ENCODE measurements at regions of chr20 and their contacts with region 1.

Region 1: GRCh38 chr20:12594410-12595088 is 414.2 kb upstream of the SPTLC3 start:
- DNase-seq: no peak
- ATAC-seq: no peak
- H3K4me3 ChIP-seq: no peak overlapping the region
- H3K4me3 Mint-ChIP-seq: no peak overlapping the region
- H3K27ac ChIP-seq: no peak overlapping the region
- H3K27ac Mint-ChIP-seq: no peak overlapping the region
- H3K4me1 ChIP-seq: no peaks in the 10 kb centered on the region
- H3K4me1 Mint-ChIP-seq: no peaks in the 10 kb centered on the region
- H3K27me3 ChIP-seq: no peaks in the 10 kb centered on the region
- H3K27me3 Mint-ChIP-seq: no peaks in the 10 kb centered on the region

Region 2: GRCh38 chr20:12207875-12208274 is 386.7 kb before region 1 on chr20:
- CTCF ChIA-PET with region 1: no interaction called
- POLR2A ChIA-PET with region 1: no interaction called
- DNase-seq: no peak
- ATAC-seq: no peak
- H3K4me3 ChIP-seq: no peak overlapping the region
- H3K4me3 Mint-ChIP-seq: no peak overlapping the region
- H3K27ac ChIP-seq: no peak overlapping the region
- H3K27ac Mint-ChIP-seq: no peak overlapping the region
- H3K4me1 ChIP-seq: no peaks in the 10 kb centered on the region
- H3K4me1 Mint-ChIP-seq: no peaks in the 10 kb centered on the region
- H3K27me3 ChIP-seq: no peaks in the 10 kb centered on the region
- H3K27me3 Mint-ChIP-seq: no peaks in the 10 kb centered on the region

Region 3: DNA sequence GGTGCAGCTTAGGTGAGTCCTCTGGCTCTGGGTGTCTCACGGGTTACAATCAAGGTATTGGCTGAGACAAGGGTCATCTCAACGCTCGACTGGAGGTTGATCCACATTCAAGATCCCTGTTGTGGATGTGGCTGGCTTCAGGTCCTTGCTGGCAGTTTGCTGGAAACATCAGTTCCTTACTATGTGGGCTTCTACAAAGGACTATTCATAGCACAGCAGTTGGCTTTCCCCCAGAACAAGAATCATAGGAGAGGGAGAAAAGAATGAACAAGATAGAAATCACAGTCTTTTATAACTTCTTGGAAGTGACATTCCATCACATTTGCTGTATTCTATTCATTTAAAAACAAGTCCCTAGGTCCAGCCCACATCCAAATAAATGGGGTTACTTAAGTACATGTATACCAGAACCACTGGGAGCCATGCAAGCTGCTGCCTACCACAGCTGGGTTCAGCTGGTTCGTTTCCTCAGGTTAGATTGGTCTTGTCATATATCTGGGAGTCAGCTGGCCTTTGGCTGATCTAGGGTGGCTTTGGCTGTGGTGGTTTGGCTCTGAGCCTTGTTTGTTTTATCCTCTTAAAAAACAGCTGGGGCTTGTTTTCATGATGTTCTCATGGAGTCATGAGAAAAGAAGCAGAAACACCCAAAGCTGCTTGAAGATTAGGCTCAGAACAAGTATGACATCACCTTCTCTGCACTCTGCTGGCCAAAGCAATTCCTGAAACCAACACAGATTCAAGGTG is 19.0 kb before region 1 on chr20:
- CTCF ChIA-PET with region 1: no interaction called
- POLR2A ChIA-PET with region 1: no interaction called
- DNase-seq: no peak
- ATAC-seq: no peak
- H3K4me3 ChIP-seq: no peak overlapping the region
- H3K4me3 Mint-ChIP-seq: no peak overlapping the region
- H3K27ac ChIP-seq: no peak overlapping the region
- H3K27ac Mint-ChIP-seq: no peak overlapping the region
- H3K4me1 ChIP-seq: no peaks in the 10 kb centered on the region
- H3K4me1 Mint-ChIP-seq: no peaks in the 10 kb centered on the region
- H3K27me3 ChIP-seq: no peaks in the 10 kb centered on the region
- H3K27me3 Mint-ChIP-seq: no peaks in the 10 kb centered on the region

Region 4: DNA sequence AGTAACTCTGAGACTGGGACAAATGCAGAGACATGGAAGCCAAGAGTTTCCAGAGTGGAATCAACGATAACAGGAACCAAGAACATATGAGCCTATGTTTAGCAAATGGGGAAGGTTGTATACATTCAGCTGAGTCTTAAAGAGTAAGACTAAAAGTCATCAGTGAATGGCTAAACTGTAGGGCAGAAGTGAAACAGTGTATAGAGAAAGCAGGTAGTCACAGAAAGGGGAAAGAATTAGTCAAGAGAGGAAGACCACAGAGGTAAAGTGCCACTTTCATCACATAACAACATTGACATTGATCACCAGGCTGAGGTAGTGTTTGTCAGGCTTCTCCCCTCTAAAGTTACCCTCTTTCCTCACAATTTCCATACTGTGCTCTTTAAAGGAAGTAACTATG is 107.8 kb after region 1 on chr20:
- CTCF ChIA-PET with region 1: no interaction called
- POLR2A ChIA-PET with region 1: no interaction called
- DNase-seq: no peak
- ATAC-seq: no peak
- H3K4me3 ChIP-seq: no peak overlapping the region
- H3K4me3 Mint-ChIP-seq: no peak overlapping the region
- H3K27ac ChIP-seq: no peak overlapping the region
- H3K27ac Mint-ChIP-seq: no peak overlapping the region
- H3K4me1 ChIP-seq: no peaks in the 10 kb centered on the region
- H3K4me1 Mint-ChIP-seq: no peaks in the 10 kb centered on the region
- H3K27me3 ChIP-seq: no peaks in the 10 kb centered on the region
- H3K27me3 Mint-ChIP-seq: no peaks in the 10 kb centered on the region

Region 5: DNA sequence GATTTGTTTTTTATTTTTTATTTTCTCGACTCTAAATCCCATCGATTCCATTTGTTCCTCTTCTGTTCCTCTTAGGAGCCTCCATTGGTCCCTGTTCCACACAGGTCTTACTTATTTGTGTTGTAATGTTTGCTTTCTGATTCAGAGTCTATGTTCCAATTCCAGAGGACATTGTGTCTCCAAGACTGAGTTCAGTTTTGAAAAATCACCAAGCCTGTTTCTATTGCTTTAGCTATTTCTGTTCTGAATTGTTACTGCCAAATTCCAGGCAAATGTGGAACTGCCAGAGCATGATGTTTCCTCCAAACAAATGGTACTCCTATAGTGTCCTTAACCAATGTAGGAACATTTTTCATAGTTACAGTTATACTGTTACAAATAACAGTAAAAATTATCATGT is 143.4 kb after region 1 on chr20:
- CTCF ChIA-PET with region 1: no interaction called
- POLR2A ChIA-PET with region 1: interaction called in 1 of 2 experiments, 10 read pairs
- DNase-seq: no peak
- ATAC-seq: no peak
- H3K4me3 ChIP-seq: no peak overlapping the region
- H3K4me3 Mint-ChIP-seq: no peak overlapping the region
- H3K27ac ChIP-seq: no peak overlapping the region
- H3K27ac Mint-ChIP-seq: no peak overlapping the region
- H3K4me1 ChIP-seq: no peaks in the 10 kb centered on the region
- H3K4me1 Mint-ChIP-seq: no peaks in the 10 kb centered on the region
- H3K27me3 ChIP-seq: no peaks in the 10 kb centered on the region
- H3K27me3 Mint-ChIP-seq: no peaks in the 10 kb centered on the region

Region 6: DNA sequence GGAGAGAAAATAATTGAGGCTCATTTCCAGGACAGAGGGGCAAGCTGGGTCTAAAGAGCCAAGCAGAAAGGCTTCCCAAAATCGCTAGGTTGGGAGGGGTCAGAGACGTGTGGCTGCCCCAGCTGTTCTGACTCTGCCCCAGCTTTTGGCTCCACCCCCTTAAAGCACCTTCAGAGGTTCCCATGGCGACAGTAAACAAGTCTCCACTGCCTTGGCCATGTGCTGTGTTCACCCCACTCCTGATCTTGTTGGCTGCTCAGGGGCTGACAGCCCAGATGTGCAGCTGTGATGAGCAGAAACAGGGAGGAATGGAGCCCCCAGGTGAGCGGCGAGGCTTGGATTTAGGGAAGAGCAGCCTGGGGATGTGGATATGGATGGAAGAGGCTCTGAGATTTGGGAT is 341.5 kb after region 1 on chr20:
- CTCF ChIA-PET with region 1: no interaction called
- POLR2A ChIA-PET with region 1: no interaction called
- DNase-seq: no peak
- ATAC-seq: no peak
- H3K4me3 ChIP-seq: no peak overlapping the region
- H3K4me3 Mint-ChIP-seq: no peak overlapping the region
- H3K27ac ChIP-seq: no peak overlapping the region
- H3K27ac Mint-ChIP-seq: no peak overlapping the region
- H3K4me1 ChIP-seq: no peaks in the 10 kb centered on the region
- H3K4me1 Mint-ChIP-seq: no peaks in the 10 kb centered on the region
- H3K27me3 ChIP-seq: no peaks in the 10 kb centered on the region
- H3K27me3 Mint-ChIP-seq: no peaks in the 10 kb centered on the region